Adrenal gland (tissue), 19 donors: ENCODE measurements at regions of chr1 and their contacts with region 1.

Region 1: DNA sequence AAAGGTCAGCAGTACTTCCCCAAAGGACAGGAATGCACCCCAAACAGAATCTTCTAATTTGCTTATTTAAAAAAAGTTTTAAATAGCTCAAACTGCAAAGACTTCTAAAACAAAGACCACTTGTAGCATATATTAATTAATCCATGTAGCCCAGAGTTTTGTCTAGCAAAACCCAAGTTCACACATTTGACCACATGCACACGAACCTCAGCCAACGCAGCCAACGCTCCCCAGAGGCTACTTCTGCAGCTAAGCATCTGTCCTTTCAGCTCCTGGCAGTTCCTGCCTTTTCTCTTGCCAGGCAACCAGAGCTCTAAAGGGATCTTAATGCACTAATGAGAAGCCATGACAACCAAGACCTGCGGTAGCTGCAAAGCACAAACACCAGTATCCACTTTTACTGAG is 89.6 kb downstream of the RERE start:
- DNase-seq: peak in 1 of 7 donors; percentile 69
- H3K4me3 ChIP-seq: no peak overlapping the region
- H3K27ac ChIP-seq: no peak overlapping the region
- H3K4me1 ChIP-seq: no peaks in the 10 kb centered on the region
- H3K27me3 ChIP-seq: no peaks in the 10 kb centered on the region
- CTCF ChIP-seq: no peak
- POLR2A ChIP-seq: no peak

Region 2: DNA sequence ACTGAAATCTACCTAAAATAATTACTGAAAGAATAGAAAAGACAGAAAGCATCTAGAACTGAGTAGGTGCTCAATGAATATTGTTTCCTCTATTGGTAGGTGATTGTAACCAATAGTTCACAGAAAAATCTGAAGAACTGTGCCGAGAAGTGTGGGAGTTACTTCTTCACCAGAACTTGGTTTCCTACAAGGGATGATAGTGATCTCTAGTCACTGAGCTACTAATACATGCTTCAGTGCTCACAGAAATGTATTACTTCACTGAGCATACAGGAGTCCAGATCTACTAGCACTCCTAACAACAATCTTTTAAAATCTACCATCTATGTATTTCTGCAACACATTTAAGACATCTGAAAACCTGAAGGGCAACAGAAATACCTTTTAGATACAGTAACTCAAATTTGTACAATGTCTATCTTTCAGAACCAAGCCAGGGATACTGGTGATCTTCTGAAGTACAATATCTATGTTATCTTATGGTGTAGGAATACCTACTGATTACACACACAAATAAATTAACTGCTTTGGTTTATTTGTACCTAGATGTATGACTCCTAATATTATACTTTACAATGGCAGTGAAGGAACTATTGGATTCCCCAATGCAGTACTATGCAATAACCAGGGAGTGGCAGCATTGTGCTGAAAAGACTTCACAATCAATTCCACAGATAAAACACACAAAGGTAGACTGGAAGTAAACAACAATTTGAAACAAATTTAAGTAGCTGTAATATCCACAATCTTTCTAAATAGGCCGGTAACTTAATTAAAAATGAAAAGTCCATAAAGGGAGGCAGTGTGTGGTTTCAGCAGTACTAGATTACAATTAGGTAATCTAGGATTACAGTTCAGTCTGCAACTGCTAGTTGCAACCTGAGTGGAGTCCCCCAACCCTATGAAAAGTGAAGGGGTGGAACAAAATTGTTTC is 166.9 kb before region 1 on chr1:
- intact Hi-C with region 1: loop called (anchors 10 kb)
- DNase-seq: peak in 3 of 7 donors; percentile 44 to 62 (median 44)
- H3K4me3 ChIP-seq: no peak overlapping the region
- H3K27ac ChIP-seq: no peak overlapping the region
- H3K4me1 ChIP-seq: peaks cover 5 to 24% of the 10 kb centered on the region in 2 donors
- H3K27me3 ChIP-seq: no peaks in the 10 kb centered on the region
- CTCF ChIP-seq: peak; percentile 87 to 97 (median 94)
- POLR2A ChIP-seq: no peak